ENCODE measurements at regions of chr2 and their contacts with region 1.

Region 1: DNA sequence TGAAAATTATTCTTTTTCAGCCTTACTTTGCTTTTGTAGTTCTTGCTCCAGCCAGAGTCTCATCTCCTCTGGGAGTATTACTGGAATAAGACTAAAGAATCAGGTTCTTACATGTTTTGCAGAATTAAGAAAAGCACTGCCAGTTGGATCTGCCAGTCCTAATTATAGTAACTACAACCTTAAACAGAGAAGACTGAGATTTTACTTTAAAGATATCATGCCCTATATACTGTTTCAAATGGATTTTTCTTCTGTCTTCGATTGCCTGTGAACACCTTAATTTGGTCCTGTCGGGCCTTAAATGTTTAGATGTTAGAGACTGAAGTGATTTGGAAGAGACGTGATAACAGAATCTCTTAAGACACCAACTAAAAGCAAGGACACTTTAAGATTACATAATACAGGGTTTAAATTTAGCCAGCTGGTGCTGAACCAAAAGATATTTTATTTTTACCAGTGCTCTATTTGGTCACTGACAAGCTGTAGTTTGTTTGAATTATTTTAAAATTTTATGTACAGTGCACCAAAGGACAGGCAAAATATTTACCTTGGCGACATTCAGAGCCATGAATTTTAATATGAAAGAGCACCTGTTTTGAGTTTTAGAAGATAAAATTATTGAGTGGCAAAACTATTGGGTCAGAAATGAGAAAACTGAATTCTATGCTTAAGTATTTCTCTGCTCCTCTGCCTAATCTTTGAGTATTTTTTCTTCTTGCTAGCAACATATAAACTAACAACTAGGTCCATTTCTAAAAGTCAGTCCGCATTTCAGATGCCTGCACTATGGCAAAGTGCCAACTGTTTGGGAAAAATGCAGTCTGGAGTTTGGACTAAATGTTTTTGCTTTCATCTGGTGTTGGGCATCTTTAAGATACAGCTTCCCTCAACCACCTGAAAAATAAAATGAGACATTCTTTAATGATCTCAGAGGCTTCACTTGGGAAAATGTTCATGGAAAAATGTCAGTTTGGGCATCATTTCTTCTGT is 300.0 kb downstream of the XIRP2 start:
- DNase-seq: no peak
- ATAC-seq: peak in 5 of 8 donors; percentile 42 to 74 (median 65)
- H3K4me3 ChIP-seq: peak overlapping the region in 9 of 10 donors; percentile 27 to 55 (median 47)
- H3K27ac ChIP-seq: peak overlapping the region; percentile 23 to 87 (median 66)
- H3K4me1 ChIP-seq: peaks cover 0 to 35% (median 8%) of the 10 kb centered on the region in 9 donors
- H3K27me3 ChIP-seq: no peaks in the 10 kb centered on the region
- CTCF ChIP-seq: no peak

Region 2: DNA sequence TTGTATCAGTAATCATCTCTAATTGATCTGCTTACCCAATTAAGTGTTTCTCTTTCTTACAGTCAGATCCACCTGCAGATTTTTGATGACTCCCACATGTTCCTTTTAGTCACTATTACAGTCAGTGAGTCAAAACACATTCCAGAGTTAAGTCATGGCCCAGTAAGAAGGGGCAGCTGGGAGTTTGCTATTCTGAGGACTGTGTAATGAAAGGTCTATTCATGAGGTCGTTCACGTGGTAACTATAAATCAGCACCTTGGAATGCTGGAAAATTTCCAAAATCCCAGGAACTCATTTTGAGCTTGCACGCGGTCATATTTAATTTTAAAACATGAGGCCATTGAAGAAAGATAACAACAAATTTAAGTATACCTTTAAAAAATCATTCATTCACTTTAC is 47.5 kb before region 1 on chr2:
- intact Hi-C with region 1: loop called in 5 of 10 experiments (anchors 2 to 5 kb)
- DNase-seq: peak in 1 of 2 donors; percentile 61
- ATAC-seq: peak; percentile 85 to 99 (median 97)
- H3K4me3 ChIP-seq: peak overlapping the region in 1 of 10 donors; percentile 12
- H3K27ac ChIP-seq: peak overlapping the region in 6 of 10 donors; percentile 9 to 85 (median 78)
- H3K4me1 ChIP-seq: peaks cover 0 to 20% (median 7%) of the 10 kb centered on the region in 9 donors
- H3K27me3 ChIP-seq: no peaks in the 10 kb centered on the region
- CTCF ChIP-seq: no peak

Region 3: GRCh38 chr2:167147271-167147941 is 40.9 kb before region 1 on chr2:
- intact Hi-C with region 1: loop called in 4 of 10 experiments (anchors 5 kb)
- DNase-seq: no peak
- ATAC-seq: no peak
- H3K4me3 ChIP-seq: no peak overlapping the region
- H3K27ac ChIP-seq: no peak overlapping the region
- H3K4me1 ChIP-seq: peaks cover 0 to 10% (median 0%) of the 10 kb centered on the region in 9 donors
- H3K27me3 ChIP-seq: no peaks in the 10 kb centered on the region
- CTCF ChIP-seq: no peak

Measured in heart right ventricle (tissue), 16 donors.